ENCODE measurements at regions of chr18 and their contacts with region 1.

Region 1: GRCh38 chr18:47846431-47846830 is 84.0 kb downstream of the SMAD2 start:
- DNase-seq: no peak
- ATAC-seq: no peak
- H3K4me3 ChIP-seq: no peak overlapping the region
- H3K27ac ChIP-seq: no peak overlapping the region
- H3K4me1 ChIP-seq: no peaks in the 10 kb centered on the region
- H3K27me3 ChIP-seq: no peaks in the 10 kb centered on the region
- CTCF ChIP-seq: no peak
- POLR2A ChIP-seq: no peak

Region 2: DNA sequence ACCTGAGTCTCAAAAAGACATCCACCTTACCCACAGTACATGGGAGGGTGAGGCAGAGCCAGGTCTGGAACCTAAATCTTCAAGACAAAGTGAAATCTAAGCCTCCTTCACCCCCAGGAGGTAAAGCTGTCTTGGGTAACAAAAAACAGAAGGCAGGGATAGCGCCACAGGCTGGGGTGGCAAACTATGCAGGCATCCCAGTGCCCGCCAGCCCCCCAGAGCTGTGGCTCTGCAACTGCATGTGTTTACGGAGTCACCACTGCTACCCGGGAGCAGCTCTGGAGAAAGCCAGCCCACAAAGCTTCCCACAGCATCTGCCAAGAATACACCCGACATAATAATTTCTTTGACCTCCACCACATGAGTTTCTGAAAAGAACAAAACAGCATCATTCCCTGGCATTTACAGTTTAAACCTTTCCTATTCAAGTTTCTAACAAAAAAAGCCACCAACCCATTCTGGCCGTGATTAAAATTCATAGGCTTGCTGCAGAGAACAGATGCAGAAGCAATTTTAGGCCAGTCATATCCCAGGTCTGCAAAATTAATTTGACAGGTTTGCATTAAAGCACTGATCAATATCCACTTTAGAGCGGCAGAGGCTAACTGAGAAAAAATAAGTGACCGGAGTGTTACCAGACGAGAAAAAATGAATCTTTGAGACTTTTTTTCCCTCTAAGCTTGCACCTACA is 285.6 kb before region 1 on chr18:
- intact Hi-C with region 1: no loop called
- DNase-seq: no peak
- ATAC-seq: no peak
- H3K4me3 ChIP-seq: no peak overlapping the region
- H3K27ac ChIP-seq: no peak overlapping the region
- H3K4me1 ChIP-seq: no peaks in the 10 kb centered on the region
- H3K27me3 ChIP-seq: peaks cover 0 to 61% (median 26%) of the 10 kb centered on the region in 9 donors
- CTCF ChIP-seq: no peak
- POLR2A ChIP-seq: no peak

Region 3: DNA sequence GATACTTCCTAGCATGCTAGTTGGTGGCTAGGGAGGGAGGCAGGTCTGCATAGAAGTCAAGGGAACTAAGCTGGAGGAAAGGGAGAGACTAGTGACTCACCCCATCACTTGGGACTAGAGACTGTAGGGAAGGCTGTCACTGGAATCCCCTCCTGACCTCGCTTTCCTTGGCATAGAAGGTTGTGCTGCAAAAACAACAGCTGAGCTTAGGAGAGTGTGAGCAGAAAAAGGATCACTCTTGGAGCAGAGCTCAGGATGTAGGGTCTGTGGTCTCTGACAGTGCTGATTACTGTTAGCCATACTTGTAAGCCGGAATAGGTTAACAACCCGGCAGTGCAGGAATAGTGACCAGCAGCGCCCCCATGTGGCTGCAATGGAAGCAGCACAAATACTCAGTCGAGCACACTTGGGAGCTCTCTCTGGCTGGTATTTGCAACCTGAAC is 150.9 kb after region 1 on chr18:
- intact Hi-C with region 1: loop called in 1 of 10 experiments (anchors 10 kb)
- DNase-seq: no peak
- ATAC-seq: no peak
- H3K4me3 ChIP-seq: no peak overlapping the region
- H3K27ac ChIP-seq: no peak overlapping the region
- H3K4me1 ChIP-seq: peaks cover 0 to 8% (median 0%) of the 10 kb centered on the region in 12 donors
- H3K27me3 ChIP-seq: no peaks in the 10 kb centered on the region
- CTCF ChIP-seq: peak in 7 of 12 donors; percentile 21 to 37 (median 31)
- POLR2A ChIP-seq: no peak